ENCODE measurements at regions of chr7 and their contacts with region 1.

Region 1: DNA sequence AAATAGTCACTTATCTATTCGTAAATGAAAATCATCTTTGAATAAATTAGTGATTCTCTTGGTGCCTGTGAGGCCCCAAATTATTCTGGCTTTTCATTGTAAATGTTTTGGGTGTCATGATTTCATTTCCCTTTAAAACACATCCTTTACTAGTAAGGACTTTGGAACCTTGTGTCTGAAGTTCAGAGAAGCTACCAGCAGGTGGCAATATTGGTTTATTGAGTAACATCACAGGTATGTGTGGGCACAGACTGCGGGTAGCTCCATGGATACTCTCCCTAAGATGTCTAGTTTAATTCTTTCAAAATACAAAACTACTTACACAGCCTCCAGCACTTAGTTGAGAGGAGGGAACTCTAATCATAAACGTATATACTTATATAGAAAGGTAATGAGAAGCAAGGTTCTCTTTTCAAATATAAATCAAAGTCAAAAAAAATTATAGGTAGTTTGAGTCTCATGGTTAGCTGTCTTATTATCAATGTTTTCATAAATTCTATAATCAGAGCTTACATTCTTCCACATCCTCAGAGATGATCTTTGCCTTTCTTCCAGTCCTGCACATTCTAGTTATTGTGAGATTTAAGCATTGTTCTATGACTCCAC is 449.6 kb downstream of the GRM8 start:
- DNase-seq: peak; percentile 40 to 64
- H3K4me3 ChIP-seq: no peak overlapping the region
- H3K27ac ChIP-seq: no peak overlapping the region
- H3K4me1 ChIP-seq: no peaks in the 10 kb centered on the region
- H3K27me3 ChIP-seq: no peaks in the 10 kb centered on the region
- CTCF ChIP-seq: peak; percentile 87

Region 2: DNA sequence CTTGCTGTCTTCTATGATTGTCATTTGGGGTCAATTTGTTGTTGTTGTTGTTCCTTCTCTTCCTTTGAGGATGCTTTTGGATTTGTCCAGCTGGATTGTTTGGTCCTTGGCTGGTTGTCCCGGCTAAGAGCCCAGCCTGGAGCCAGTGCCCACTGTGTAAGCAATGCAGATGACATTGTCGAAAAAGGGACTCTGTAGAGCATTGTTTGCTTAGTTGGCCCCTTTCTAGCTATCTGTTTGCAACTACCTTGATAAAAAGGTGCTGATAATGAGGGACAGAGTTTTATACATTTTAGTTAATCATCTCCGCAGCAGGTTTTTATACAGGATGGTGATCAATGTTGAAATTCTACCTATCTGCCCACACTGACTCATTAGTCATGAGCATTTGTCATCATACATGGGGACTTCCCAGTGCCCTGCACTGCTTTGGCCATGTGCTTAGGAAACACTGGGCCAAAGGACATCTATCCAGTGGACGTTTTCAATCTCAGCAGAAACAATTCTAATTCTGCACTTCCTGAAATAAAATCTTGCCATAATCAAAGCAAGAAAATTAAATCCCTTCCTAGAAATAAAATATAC is 137.7 kb after region 1 on chr7:
- CTCF ChIA-PET with region 1: no interaction called
- POLR2A ChIA-PET with region 1: no interaction called
- intact Hi-C with region 1: no loop called
- DNase-seq: no peak
- H3K4me3 ChIP-seq: no peak overlapping the region
- H3K27ac ChIP-seq: no peak overlapping the region
- H3K4me1 ChIP-seq: no peaks in the 10 kb centered on the region
- H3K27me3 ChIP-seq: no peaks in the 10 kb centered on the region
- CTCF ChIP-seq: no peak

Region 3: GRCh38 chr7:127253281-127254162 is 450.4 kb after region 1 on chr7:
- CTCF ChIA-PET with region 1: no interaction called
- POLR2A ChIA-PET with region 1: no interaction called
- intact Hi-C with region 1: loop called (anchors 2 kb)
- DNase-seq: peak in 1 of 2 experiments; percentile 60
- H3K4me3 ChIP-seq: peak overlapping the region; percentile 84
- H3K27ac ChIP-seq: no peak overlapping the region
- H3K4me1 ChIP-seq: no peaks in the 10 kb centered on the region
- H3K27me3 ChIP-seq: peaks cover 23% of the 10 kb centered on the region
- CTCF ChIP-seq: peak; percentile 93

Region 4: DNA sequence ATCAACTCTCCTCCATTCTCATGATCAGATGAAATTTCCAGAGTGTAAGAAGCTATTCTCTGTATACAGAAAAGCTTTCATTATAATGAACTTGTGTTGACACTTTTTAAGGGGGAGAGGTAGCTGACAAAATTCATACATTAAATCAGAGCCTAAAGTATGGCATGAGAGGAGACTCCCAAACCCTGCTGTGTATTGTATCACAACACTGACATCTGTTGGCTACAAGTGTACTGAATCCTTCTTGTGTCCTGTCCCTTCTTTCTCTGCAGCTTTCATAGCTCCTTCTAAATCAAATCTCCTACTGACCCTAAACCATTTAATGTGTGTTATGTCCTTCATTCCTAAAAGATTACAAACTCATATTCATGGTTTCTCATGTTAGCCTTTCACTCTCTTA is 711.3 kb after region 1 on chr7:
- CTCF ChIA-PET with region 1: no interaction called
- POLR2A ChIA-PET with region 1: no interaction called
- intact Hi-C with region 1: loop called (anchors 1 kb)
- DNase-seq: peak in 1 of 2 experiments; percentile 37
- H3K4me3 ChIP-seq: no peak overlapping the region
- H3K27ac ChIP-seq: no peak overlapping the region
- H3K4me1 ChIP-seq: no peaks in the 10 kb centered on the region
- H3K27me3 ChIP-seq: peaks cover 19% of the 10 kb centered on the region
- CTCF ChIP-seq: peak; percentile 42; the same call in 1 of the 2 replicates

Region 5: DNA sequence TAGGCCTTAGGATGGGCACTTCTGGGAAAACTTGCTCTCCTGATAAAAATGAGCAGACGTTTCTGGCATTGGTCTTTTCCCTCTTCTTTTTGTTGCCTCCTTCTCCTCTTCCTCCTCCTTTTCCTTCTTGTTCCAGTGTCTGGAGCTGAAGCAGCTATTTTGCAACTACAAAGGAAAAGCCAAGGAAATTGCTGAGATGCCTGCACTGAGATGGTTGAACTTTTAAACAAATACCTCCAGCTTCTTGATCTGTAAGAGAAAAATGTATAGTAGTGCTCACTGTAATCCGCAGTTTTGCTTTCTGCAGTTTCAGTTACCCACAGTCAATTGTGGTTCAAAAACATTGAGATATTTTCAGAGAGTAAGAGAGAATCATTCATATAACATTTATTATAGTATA is 841.3 kb after region 1 on chr7:
- CTCF ChIA-PET with region 1: interaction called, 17 read pairs
- POLR2A ChIA-PET with region 1: no interaction called
- intact Hi-C with region 1: no loop called
- DNase-seq: no peak
- H3K4me3 ChIP-seq: no peak overlapping the region
- H3K27ac ChIP-seq: no peak overlapping the region
- H3K4me1 ChIP-seq: no peaks in the 10 kb centered on the region
- H3K27me3 ChIP-seq: no peaks in the 10 kb centered on the region
- CTCF ChIP-seq: no peak

Region 6: DNA sequence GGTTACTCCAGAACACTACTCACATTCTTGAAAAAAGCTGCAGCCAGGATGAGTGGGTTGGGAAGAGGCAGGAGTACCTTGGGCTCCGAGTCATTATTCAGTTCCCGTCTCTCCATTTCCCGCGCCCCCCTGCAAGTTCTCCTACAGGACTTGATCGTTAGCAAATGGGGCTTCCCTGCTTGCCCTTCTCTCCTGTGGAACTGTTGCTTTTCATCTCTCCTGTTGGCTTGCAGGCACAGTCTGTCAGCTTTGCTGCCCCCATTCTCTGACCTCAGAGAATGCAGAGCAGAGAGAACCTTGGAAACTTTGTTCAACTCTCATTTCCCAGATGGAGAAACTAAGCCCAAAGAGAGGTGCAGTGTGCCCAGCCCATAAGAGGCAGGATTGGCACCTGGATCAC is 1263.7 kb after region 1 on chr7:
- CTCF ChIA-PET with region 1: no interaction called
- POLR2A ChIA-PET with region 1: no interaction called
- intact Hi-C with region 1: no loop called
- DNase-seq: no peak
- H3K4me3 ChIP-seq: no peak overlapping the region
- H3K27ac ChIP-seq: no peak overlapping the region
- H3K4me1 ChIP-seq: no peaks in the 10 kb centered on the region
- H3K27me3 ChIP-seq: no peaks in the 10 kb centered on the region
- CTCF ChIP-seq: no peak

Measured in PC-9 (cell line).